OCI-LY7 (cell line): ENCODE measurements at regions of chr12 and their contacts with region 1.

Region 1: GRCh38 chr12:47832263-47832933 is 12.7 kb upstream of the HDAC7 start:
- DNase-seq: peak; percentile 77
- H3K4me3 ChIP-seq: peak overlapping the region; percentile 54
- H3K27ac ChIP-seq: peak overlapping the region; percentile 93
- H3K4me1 ChIP-seq: peaks cover 94% of the 10 kb centered on the region
- CTCF ChIP-seq: no peak

Region 2: GRCh38 chr12:47578836-47579235 is 253.6 kb before region 1 on chr12:
- CTCF ChIA-PET with region 1: no interaction called
- POLR2A ChIA-PET with region 1: no interaction called
- intact Hi-C with region 1: no loop called
- DNase-seq: no peak
- H3K4me3 ChIP-seq: no peak overlapping the region
- H3K27ac ChIP-seq: no peak overlapping the region
- H3K4me1 ChIP-seq: no peaks in the 10 kb centered on the region
- CTCF ChIP-seq: no peak

Region 3: GRCh38 chr12:47819896-47820630 is 12.3 kb before region 1 on chr12 and contains the start of gene HDAC7:
- CTCF ChIA-PET with region 1: interaction called, 85 read pairs
- POLR2A ChIA-PET with region 1: interaction called, 342 read pairs
- intact Hi-C with region 1: loop called (anchors 1 kb)
- DNase-seq: peak; percentile 83
- H3K4me3 ChIP-seq: peak within 1 kb of the TSS; percentile 83
- H3K27ac ChIP-seq: peak within 1 kb of the TSS; percentile 96
- H3K4me1 ChIP-seq: peaks cover 72% of the 10 kb centered on the region
- CTCF ChIP-seq: no peak
- total RNA-seq, gene HDAC7: 38.4 and 45.9 TPM in 2 replicates